ENCODE measurements at regions of chr17 and their contacts with region 1.

Region 1: DNA sequence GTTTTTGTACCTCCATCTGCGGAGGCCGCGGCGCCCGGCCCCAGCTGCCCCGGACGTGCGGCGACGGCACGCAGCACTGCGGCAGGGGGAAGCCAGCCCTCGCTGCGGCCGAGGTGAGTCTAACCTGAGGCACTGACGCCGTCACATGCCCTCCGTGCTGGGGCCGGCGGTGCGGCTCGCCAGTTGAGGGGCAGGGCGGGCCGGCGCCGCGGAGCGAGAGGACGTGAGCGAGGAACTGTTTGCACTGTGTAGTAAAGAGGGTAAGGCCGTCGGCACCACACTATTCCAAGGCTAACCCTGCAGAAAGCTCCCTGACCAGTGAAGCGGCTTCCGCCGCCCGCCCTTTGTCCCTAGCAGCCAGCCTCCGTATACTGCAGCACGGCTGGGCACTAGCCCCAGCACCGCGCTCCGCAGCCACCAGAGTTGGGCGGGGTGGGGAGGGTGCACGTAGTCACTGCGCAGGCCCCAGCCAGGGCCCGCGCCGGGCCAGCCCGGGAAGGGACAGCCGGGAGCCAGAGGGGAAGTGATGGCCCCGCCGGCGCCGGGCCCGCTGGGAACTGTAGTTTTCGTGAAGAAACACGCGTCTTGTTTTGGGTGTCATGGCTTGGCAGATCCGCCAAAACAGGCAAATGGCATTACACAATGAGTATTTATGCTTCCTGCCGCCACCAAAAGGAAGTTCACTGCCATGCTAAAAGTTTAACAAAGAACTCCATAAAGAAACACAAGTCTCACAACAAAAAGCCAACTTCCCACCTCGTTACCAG is 580 bp upstream of the KANSL1 start:
- DNase-seq: peak; percentile 97
- H3K4me3 Mint-ChIP-seq: peak overlapping the region; percentile 96
- H3K27ac Mint-ChIP-seq: peak overlapping the region; percentile 82
- H3K4me1 Mint-ChIP-seq: peaks cover 23% of the 10 kb centered on the region
- H3K27me3 Mint-ChIP-seq: no peaks in the 10 kb centered on the region
- CTCF ChIP-seq: peak; percentile 4

Region 2: GRCh38 chr17:44997733-44998520 is 1195.9 kb before region 1 on chr17:
- CTCF ChIA-PET with region 1: no interaction called
- POLR2A ChIA-PET with region 1: no interaction called
- intact Hi-C with region 1: no loop called
- DNase-seq: no peak
- H3K4me3 Mint-ChIP-seq: no peak overlapping the region
- H3K27ac Mint-ChIP-seq: no peak overlapping the region
- H3K4me1 Mint-ChIP-seq: no peaks in the 10 kb centered on the region
- H3K27me3 Mint-ChIP-seq: no peaks in the 10 kb centered on the region
- CTCF ChIP-seq: no peak

Region 3: DNA sequence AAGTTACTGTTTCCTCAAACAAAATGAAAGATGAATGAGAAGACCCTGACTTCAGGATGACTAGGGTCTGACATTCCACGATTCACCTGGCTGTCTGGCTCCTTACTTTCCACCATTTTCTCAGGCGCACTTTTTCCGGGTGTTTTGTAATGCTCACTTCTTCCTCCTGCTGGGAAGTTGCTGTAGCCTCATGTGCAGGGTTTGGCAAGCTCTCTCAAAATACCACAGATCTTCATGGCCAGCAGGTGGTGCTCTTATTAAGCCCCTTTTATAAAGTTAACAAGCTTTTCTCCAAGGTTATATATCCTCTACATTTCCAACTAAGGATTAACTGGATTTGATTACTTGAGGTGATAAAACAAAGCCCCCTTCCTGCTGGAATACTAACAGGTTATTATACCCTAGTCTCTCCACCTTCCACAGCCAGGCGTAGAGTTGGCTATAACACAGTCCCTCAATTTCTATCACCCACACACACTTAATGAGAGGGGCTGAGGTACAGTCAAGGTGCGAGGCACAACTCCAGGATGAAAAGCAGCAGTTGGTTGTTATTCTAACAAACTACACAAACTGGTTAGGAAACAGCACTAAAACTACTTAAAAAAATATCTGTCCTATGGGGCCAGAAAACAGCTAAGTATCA is 149.4 kb before region 1 on chr17:
- CTCF ChIA-PET with region 1: interaction called, 6 read pairs
- POLR2A ChIA-PET with region 1: interaction called, 30 read pairs
- intact Hi-C with region 1: loop called (anchors 1 kb)
- DNase-seq: peak; percentile 86
- H3K4me3 Mint-ChIP-seq: no peak overlapping the region
- H3K27ac Mint-ChIP-seq: peak overlapping the region; percentile 61
- H3K4me1 Mint-ChIP-seq: peaks cover 21% of the 10 kb centered on the region
- H3K27me3 Mint-ChIP-seq: no peaks in the 10 kb centered on the region
- CTCF ChIP-seq: peak; percentile 70

Region 4: DNA sequence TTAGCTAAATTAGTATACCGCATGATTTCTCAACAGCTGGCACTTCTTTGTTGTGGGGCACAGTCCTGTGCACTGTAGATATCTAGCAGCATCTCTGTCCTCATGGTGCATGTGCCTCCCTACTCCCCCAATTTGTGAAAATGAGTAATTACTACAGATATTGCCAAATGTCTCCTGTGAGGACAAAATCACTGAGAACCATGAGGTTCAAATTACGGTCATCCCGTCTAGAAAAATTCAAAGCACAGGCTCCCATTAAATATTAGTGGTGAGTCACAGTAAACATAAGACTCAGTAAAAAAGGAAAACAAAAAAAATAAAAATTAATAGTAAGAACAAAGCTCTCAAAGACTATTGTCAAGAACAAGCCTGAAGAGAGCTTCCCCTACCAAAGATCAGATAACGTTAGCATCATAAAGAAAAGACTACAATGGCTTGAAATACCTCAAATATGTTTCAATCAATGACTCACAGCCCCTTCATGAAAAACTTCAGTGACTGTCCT is 137.0 kb before region 1 on chr17:
- CTCF ChIA-PET with region 1: interaction called, 11 read pairs
- POLR2A ChIA-PET with region 1: interaction called, 8 read pairs
- intact Hi-C with region 1: no loop called
- DNase-seq: peak; percentile 60
- H3K4me3 Mint-ChIP-seq: no peak overlapping the region
- H3K27ac Mint-ChIP-seq: no peak overlapping the region
- H3K4me1 Mint-ChIP-seq: peaks cover 9% of the 10 kb centered on the region
- H3K27me3 Mint-ChIP-seq: no peaks in the 10 kb centered on the region
- CTCF ChIP-seq: no peak

Region 5: GRCh38 chr17:46157443-46158062 is 36.3 kb before region 1 on chr17:
- CTCF ChIA-PET with region 1: interaction called, 6 read pairs
- POLR2A ChIA-PET with region 1: interaction called, 14 read pairs
- intact Hi-C with region 1: no loop called
- DNase-seq: no peak
- H3K4me3 Mint-ChIP-seq: peak overlapping the region; percentile 23
- H3K27ac Mint-ChIP-seq: peak overlapping the region; percentile 75
- H3K4me1 Mint-ChIP-seq: peaks cover 61% of the 10 kb centered on the region
- H3K27me3 Mint-ChIP-seq: no peaks in the 10 kb centered on the region
- CTCF ChIP-seq: no peak

Region 6: GRCh38 chr17:46179375-46179999 is 14.3 kb before region 1 on chr17:
- CTCF ChIA-PET with region 1: interaction called, 5 read pairs
- POLR2A ChIA-PET with region 1: interaction called, 27 read pairs
- intact Hi-C with region 1: no loop called
- DNase-seq: no peak
- H3K4me3 Mint-ChIP-seq: no peak overlapping the region
- H3K27ac Mint-ChIP-seq: no peak overlapping the region
- H3K4me1 Mint-ChIP-seq: peaks cover 63% of the 10 kb centered on the region
- H3K27me3 Mint-ChIP-seq: no peaks in the 10 kb centered on the region
- CTCF ChIP-seq: no peak

Region 7: GRCh38 chr17:46212634-46213435 is 19.0 kb after region 1 on chr17:
- CTCF ChIA-PET with region 1: interaction called, 28 read pairs
- POLR2A ChIA-PET with region 1: interaction called, 18 read pairs
- intact Hi-C with region 1: no loop called
- DNase-seq: peak; percentile 85
- H3K4me3 Mint-ChIP-seq: no peak overlapping the region
- H3K27ac Mint-ChIP-seq: no peak overlapping the region
- H3K4me1 Mint-ChIP-seq: peaks cover 12% of the 10 kb centered on the region
- H3K27me3 Mint-ChIP-seq: no peaks in the 10 kb centered on the region
- CTCF ChIP-seq: peak; percentile 75

Measured in MCF 10A (cell line).